Heart left ventricle (tissue), 16 donors: ENCODE measurements at regions of chrX and their contacts with region 1.

Region 1: DNA sequence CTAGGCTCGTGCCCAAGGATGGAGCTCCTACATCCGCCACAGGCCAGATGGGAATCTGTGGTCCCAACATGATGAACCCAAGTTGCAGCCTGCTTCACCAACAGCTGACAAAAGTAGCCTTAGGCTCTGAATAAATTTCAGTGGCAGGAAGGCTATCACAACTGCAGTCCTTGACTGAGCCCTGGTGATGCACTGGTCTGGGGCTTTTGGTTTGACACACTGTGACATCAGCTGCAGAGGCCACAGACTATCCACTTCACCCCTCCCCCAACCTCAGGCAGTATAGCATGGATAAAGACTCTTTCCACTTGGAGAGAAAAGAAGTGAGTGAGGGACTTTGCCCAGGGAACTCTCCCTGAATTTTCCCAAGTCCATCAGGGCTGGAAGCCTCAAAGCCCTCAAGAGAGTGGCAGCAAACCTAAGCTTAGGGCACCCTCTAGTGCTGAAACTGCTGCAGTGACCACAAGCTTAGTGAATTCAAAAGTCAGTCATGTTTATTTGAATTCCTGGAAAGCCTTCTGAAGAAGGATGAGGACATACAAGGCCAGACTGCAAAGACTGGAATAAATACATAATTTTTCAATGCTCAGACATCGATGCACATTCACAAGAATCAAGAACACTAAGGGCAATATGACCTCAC is 135.0 kb upstream of the TENT5D start:
- DNase-seq: no peak
- ATAC-seq: no peak
- H3K4me3 ChIP-seq: no peak overlapping the region
- H3K27ac ChIP-seq: no peak overlapping the region
- H3K4me1 ChIP-seq: no peaks in the 10 kb centered on the region
- H3K27me3 ChIP-seq: no peaks in the 10 kb centered on the region
- CTCF ChIP-seq: peak in 8 of 12 donors; percentile 8 to 37 (median 30)
- POLR2A ChIP-seq: no peak

Region 2: GRCh38 chrX:79556800-79557199 is 728.5 kb before region 1 on chrX:
- intact Hi-C with region 1: no loop called
- DNase-seq: no peak
- ATAC-seq: no peak
- H3K4me3 ChIP-seq: no peak overlapping the region
- H3K27ac ChIP-seq: no peak overlapping the region
- H3K4me1 ChIP-seq: no peaks in the 10 kb centered on the region
- H3K27me3 ChIP-seq: peaks cover 0 to 3% (median 0%) of the 10 kb centered on the region in 9 donors
- CTCF ChIP-seq: no peak
- POLR2A ChIP-seq: no peak

Region 3: DNA sequence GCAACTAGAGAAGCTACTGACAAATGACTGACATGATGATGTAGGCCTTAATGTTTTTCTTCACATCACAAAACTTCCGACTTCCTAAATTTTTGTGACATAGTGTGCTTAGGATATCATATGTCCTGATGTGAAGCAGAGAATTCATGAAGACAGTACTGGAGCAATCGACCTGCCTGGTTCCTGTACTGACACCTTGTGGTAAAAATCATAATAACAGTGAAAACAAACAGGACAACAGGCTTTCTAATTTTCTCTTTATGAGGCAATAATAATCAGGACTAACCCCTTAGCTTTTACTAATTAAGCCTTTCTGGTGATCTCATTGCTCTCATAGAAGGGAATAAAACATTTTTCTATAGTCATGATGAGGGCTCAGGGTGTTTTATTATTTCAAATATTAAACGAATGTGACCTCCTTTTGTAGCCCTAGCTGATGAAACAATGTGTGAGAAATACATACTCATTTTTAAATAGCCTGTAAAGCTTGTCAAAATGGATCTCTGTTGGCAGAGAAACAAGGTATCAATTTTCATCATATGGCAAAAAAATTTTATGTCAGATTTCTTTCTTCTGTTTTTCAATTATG is 293.4 kb after region 1 on chrX:
- intact Hi-C with region 1: loop called in 1 of 10 experiments (anchors 10 kb)
- DNase-seq: no peak
- ATAC-seq: no peak
- H3K4me3 ChIP-seq: no peak overlapping the region
- H3K27ac ChIP-seq: no peak overlapping the region
- H3K4me1 ChIP-seq: no peaks in the 10 kb centered on the region
- H3K27me3 ChIP-seq: no peaks in the 10 kb centered on the region
- CTCF ChIP-seq: peak; percentile 10 to 62 (median 42)
- POLR2A ChIP-seq: no peak